GM13976 (cell line): ENCODE measurements at regions of chr7 and their contacts with region 1.

Region 1: DNA sequence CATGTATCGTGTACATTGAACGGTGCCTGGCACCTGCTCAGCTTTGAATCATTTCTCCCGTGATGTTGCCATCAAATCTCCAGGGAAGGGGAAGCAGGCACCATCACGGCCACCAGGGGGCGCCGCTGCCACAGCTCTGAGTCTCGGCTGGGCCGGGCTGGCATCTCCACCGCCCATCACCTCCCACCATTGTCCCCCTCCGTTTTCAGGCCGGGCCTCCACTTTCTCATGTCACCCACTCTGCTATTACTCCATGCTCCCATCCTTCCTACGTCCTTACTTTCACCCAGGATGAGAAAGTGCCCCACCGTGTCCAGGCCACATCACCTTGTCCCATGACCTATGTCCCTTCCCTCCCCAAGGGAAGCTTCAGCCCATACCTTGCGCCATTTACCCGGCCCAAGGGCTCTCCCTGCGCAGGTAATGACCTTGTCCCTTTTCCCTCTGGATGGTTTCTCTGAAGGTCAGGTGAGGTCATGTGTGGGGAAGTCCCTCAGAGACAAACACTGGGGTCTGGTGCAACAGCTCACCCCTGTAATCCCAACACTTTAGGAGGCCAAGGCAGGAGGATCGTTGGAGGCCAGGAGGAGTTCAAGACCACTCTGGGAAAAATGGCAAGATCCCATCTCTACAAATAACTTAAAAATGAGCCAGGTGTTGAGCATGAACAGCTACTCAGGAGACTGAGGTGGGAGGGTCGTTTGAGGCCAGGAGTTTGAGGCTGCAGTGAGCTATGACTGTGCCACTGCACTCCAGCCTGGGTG is 31.8 kb upstream of the OCM2 start:
- DNase-seq: peak; percentile 85
- CTCF ChIP-seq: peak; percentile 86

Region 2: GRCh38 chr7:98157761-98158160 is 136.0 kb after region 1 on chr7:
- in situ Hi-C with region 1: loop called (anchors 10 kb)
- DNase-seq: no peak
- CTCF ChIP-seq: no peak